Activated T-helper 1 cell treated with anti-CD3 and anti-CD28 coated beads, Interleukin-12 subunit alpha, Interleukin-12 subunit beta, Interleukin-2, Interleukin-4 antibody, amounts not matched to agents 30 ng/mL and 10 ng/mL and 1 ng/mL, durations not matched to agents 14 hours and 24 hours and 36 hours (primary cell): ENCODE measurements at regions of chr3 and their contacts with region 1.

Region 1: GRCh38 chr3:59386165-59386564 is 336.3 kb upstream of the CFAP20DC start:
- DNase-seq: no peak
- H3K4me3 Mint-ChIP-seq: peak overlapping the region; percentile 32
- H3K27ac Mint-ChIP-seq: peak overlapping the region; percentile 97
- H3K4me1 Mint-ChIP-seq: peaks cover 91% of the 10 kb centered on the region
- H3K27me3 Mint-ChIP-seq: no peaks in the 10 kb centered on the region

Region 2: GRCh38 chr3:58989163-58989562 is 397.0 kb before region 1 on chr3:
- intact Hi-C with region 1: no loop called
- DNase-seq: no peak
- H3K4me3 Mint-ChIP-seq: no peak overlapping the region
- H3K27ac Mint-ChIP-seq: no peak overlapping the region
- H3K4me1 Mint-ChIP-seq: no peaks in the 10 kb centered on the region
- H3K27me3 Mint-ChIP-seq: peaks cover 19% of the 10 kb centered on the region

Region 3: DNA sequence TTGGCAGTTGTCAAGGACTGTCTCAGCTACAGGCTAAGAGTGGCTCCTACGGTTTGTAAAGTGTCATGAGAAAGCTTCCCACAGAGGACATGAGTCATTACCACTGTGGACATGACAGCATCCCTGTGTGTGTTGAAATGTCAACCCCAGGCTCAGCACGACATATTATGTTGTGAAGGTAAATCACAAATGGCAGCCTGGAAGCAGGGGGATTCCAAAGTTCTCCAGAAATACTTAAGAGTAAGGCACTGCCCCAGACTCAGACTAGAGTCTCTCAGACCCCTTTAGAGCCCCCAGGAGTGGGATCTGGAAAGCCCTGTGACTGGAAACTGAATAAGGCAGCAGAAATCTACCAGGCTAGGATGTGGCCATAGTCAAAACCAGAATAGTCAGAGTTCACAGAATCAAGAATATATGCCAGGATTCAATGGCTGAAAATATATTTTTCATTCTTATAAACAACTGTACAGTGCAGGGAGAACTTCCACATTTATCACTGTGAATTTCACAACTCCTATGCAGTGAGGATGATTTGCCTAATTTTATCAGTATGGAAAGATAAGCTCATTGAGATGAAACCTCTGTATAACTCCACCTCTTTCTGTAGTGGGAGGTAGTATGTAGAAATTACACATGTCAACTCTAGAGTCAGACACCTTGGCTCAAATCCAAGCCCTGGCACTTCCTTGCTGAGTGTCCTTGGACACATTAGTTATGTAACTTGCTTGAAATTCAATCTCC is 99.2 kb before region 1 on chr3:
- intact Hi-C with region 1: loop called (anchors 1 kb)
- DNase-seq: peak; percentile 29
- H3K4me3 Mint-ChIP-seq: peak overlapping the region; percentile 1
- H3K27ac Mint-ChIP-seq: peak overlapping the region; percentile 91
- H3K4me1 Mint-ChIP-seq: peaks cover 37% of the 10 kb centered on the region
- H3K27me3 Mint-ChIP-seq: no peaks in the 10 kb centered on the region

Region 4: DNA sequence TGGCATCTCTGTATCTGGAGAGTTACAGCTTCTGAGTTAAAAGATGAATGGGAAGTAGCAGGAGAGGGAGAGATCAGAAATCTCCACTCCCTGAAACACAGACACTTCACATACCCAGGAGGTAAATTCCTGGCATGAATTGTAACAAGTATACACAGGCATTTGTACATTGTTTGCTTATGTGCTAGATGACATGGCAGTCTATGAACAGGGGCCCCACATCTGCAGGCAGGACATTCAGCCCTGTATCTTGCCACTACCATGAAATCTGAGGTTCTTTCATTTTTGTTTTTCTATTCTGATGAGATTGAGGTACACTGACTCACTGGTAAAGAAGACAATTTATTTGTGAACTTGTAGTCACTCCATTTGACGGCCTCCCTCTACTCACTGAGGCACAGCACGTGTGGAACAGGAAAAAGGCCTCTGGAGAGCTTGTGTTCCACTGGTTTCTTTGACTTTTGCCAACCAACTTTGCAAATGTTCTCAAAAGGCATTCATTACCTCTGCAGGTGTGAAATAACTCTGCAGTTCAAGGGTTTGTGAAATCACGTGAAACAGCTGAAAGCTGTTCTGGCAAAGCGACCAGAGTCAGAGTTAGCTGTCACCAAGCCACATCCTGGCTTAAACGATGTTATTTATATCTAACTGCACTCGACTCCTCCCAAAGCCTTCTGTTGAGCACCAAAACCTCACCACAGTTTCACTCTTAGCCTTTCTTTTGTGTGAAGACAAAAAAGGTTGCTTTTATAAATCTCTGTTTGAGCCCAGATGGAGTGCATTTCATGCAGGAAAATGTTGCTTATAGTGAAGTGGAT is 65.0 kb after region 1 on chr3:
- intact Hi-C with region 1: loop called (anchors 1 kb)
- DNase-seq: peak; percentile 74
- H3K4me3 Mint-ChIP-seq: peak overlapping the region; percentile 65
- H3K27ac Mint-ChIP-seq: peak overlapping the region; percentile 97
- H3K4me1 Mint-ChIP-seq: peaks cover 81% of the 10 kb centered on the region
- H3K27me3 Mint-ChIP-seq: no peaks in the 10 kb centered on the region

Region 5: DNA sequence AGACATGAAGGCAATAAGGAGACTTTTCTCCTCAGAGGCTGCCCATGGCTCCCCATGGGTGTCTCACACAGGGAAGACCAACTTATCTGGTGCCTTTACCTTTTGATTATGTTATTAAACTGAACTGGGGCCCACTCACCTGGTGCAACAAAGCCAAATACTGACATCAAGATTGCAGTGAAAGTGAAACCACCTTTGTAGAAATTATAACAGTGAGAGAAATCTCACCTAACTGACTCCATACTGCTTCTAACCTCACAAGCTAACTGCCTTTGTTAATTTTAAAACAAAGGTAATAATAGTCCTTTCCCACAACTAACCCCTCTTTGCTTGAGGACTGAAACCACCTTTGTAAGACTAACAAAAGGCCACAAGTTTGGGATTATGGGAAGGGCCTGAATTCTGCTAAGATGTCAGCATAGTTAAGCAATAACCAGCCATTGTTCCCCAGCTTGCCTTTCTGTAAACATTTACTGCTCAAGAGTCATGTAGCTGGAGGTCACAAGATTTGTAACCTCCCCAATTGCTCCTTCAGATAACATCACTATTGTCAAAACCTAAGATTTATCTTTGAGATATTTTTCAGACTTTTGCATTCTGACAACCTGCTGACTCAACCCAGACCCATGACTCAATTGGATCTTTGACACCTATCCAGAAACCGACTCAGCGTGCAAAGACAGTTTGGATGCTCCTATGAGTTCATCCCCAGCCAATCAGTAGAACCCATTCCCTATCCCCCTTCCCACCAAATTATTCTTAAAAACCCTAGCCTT is 84.0 kb after region 1 on chr3:
- intact Hi-C with region 1: no loop called
- DNase-seq: no peak
- H3K4me3 Mint-ChIP-seq: no peak overlapping the region
- H3K27ac Mint-ChIP-seq: peak overlapping the region; percentile 64
- H3K4me1 Mint-ChIP-seq: peaks cover 38% of the 10 kb centered on the region
- H3K27me3 Mint-ChIP-seq: no peaks in the 10 kb centered on the region

Region 6: GRCh38 chr3:59559721-59560435 is 173.7 kb after region 1 on chr3:
- intact Hi-C with region 1: loop called (anchors 1 kb)
- DNase-seq: no peak
- H3K4me3 Mint-ChIP-seq: no peak overlapping the region
- H3K27ac Mint-ChIP-seq: peak overlapping the region; percentile 88
- H3K4me1 Mint-ChIP-seq: peaks cover 24% of the 10 kb centered on the region
- H3K27me3 Mint-ChIP-seq: no peaks in the 10 kb centered on the region

Region 7: GRCh38 chr3:59935025-59935424 is 548.9 kb after region 1 on chr3:
- intact Hi-C with region 1: loop called (anchors 2 kb)
- DNase-seq: peak; percentile 6
- H3K4me3 Mint-ChIP-seq: peak overlapping the region; percentile 54
- H3K27ac Mint-ChIP-seq: peak overlapping the region; percentile 82
- H3K4me1 Mint-ChIP-seq: peaks cover 43% of the 10 kb centered on the region
- H3K27me3 Mint-ChIP-seq: no peaks in the 10 kb centered on the region

Region 8: GRCh38 chr3:60192297-60193114 is 806.3 kb after region 1 on chr3:
- intact Hi-C with region 1: loop called (anchors 2 kb)
- DNase-seq: no peak
- H3K4me3 Mint-ChIP-seq: peak overlapping the region; percentile 62
- H3K27ac Mint-ChIP-seq: peak overlapping the region; percentile 94
- H3K4me1 Mint-ChIP-seq: peaks cover 58% of the 10 kb centered on the region
- H3K27me3 Mint-ChIP-seq: no peaks in the 10 kb centered on the region